ENCODE measurements at regions of chr22 and their contacts with region 1.

Region 1: DNA sequence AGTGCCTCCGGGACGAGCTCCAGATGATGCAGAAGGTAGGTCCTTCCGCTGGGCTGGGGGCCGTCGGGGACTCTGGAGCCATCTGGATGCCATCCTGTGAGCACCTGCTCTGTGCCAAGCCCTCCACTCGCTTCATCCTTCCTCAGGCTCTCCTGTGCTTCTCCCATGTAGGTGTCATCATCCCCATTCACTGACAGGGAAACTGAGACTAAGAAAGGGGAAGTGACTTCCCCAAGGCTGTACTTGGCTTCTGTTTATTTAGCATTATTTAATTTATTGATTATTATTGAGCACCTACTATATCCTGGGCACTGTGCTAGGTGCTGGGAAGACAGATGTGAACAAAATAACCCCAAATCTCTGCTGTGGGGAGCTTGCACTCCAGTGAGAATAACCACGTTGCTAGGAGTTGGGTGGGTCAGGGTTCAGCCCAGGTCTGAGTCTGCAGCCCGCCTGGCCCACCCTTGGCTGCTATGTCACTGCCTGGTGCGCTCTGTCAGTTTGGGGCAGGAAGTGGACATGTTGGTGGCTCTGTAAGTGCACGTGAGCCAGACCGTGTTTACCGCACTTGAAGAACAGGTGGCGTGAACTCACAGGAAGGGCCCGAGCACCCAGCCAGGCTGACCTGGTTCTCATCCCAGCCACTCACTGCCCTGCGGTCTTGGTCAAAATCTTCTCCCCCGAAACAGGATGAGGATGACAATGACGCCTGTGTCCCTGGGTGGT is 35.9 kb upstream of the GCAT start:
- DNase-seq: no peak
- H3K4me3 ChIP-seq: no peak overlapping the region
- H3K27ac ChIP-seq: no peak overlapping the region
- H3K4me1 ChIP-seq: peaks cover 24% of the 10 kb centered on the region
- H3K27me3 ChIP-seq: no peaks in the 10 kb centered on the region
- CTCF ChIP-seq: no peak

Region 2: DNA sequence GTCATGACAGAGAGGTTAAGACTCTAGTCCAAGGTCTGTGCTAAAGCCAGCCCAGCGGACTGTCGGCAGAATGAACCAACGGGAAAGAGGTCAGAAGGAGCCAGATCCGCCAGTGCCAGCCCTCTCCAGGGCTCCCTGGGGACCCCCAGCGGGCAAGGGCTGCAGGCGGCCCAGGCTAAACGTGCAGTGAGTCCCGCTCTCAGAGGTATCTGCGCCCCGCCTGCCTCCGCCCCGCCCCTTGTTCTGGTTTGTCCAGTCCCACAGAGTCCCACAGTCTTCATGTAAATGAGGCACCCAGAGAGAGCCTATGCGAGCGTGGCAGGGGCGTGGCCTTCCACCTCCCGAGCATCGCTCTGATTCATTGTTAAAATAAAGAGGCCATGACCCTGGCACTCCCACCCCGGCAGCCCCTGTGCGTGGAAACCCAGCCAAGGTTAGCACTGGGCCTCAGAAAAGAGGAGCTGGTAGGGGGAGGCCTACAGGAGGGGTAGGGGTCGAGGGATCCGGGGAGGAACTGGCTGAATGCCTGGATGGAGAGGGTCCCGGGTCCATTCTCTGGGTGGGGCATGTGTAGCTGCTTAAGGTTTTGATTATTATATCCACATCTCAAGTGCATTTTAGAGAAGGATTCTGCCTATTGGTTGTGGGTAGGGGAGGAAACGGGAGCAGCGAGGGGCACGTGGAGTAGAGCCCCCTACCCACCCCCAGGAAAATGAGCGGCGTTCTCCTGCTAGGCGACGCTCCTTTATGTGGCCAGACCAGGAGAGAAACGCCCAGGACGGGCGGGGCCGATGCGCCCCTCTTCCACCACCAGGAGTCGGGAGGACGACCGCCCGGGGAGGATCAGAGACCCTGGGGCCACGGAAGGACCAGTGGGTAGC is 75.0 kb before region 1 on chr22 and contains the start of gene TRIOBP:
- CTCF ChIA-PET with region 1: no interaction called
- dilution Hi-C with region 1: loop called (anchors 5 kb)
- in situ Hi-C with region 1: no loop called
- intact Hi-C with region 1: no loop called
- DNase-seq: peak; percentile 68
- H3K4me3 ChIP-seq: peak within 1 kb of the TSS in 1 of 3 experiments; percentile 7
- H3K27ac ChIP-seq: no peak within 1 kb of the TSS
- H3K4me1 ChIP-seq: peaks cover 9% of the 10 kb centered on the region
- H3K27me3 ChIP-seq: no peaks in the 10 kb centered on the region
- CTCF ChIP-seq: peak in 1 of 2 donors; percentile 46
- total RNA-seq, gene TRIOBP: 117 to 138 TPM

Region 3: DNA sequence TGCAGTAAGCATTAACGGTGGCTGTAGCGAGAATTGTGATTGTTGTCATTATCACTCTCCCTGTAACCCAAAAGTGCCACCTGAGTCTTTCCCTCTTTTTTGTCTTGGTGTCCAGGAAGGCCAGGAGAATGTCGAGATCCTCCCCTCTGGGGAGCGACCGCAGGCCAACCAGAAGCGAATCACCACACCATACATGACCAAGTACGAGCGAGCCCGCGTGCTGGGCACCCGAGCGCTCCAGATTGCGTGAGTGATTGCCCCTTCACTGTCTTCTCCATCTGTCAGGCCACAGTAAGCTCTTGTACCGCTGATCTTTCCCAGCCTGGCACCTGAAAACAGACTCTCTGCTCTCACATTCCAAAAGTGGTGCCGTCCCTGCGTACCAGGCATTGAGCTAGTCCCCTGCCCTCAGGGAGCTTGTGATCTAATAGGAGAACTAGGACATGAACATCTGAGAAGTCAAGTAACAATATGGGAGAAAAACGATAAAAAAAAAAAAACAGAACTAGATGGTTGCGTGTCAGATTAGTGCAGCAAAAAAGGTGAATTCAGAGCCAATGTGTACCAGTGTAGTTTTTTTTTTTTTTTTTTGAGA is 187.5 kb after region 1 on chr22:
- CTCF ChIA-PET with region 1: interaction called, 10 read pairs
- dilution Hi-C with region 1: no loop called
- in situ Hi-C with region 1: no loop called
- intact Hi-C with region 1: no loop called
- DNase-seq: no peak
- H3K4me3 ChIP-seq: no peak overlapping the region
- H3K27ac ChIP-seq: no peak overlapping the region
- H3K4me1 ChIP-seq: peaks cover 12% of the 10 kb centered on the region
- H3K27me3 ChIP-seq: no peaks in the 10 kb centered on the region
- CTCF ChIP-seq: no peak

Measured in mammary epithelial cell (primary cell).